ENCODE measurements at regions of chr12 and their contacts with region 1.

Region 1: DNA sequence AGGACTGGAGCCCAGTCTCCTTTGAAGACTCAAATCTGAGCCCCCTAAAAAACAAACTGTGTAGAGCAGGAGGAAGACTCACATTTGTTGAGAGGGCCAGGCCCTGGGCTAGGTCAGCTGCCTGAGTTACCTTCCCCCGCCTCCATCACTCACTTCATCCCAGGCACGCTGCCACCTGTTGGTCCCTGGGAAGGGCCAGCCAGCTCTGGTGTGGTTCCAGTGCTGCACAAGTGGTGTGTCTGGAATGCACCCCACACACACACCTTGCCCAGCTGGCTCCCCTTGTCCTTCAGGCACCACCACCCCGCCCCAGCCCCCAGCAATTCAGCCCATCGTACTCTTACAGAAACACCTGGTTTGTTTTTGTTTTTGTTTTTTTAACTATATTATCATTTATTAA is 9.1 kb downstream of the MVK start:
- DNase-seq: peak; percentile 35
- H3K4me3 Mint-ChIP-seq: peak overlapping the region; percentile 59
- H3K27ac Mint-ChIP-seq: peak overlapping the region; percentile 92
- H3K4me1 Mint-ChIP-seq: peaks cover 14% of the 10 kb centered on the region
- H3K27me3 Mint-ChIP-seq: no peaks in the 10 kb centered on the region
- CTCF ChIP-seq: no peak

Region 2: GRCh38 chr12:109214131-109214530 is 368.5 kb before region 1 on chr12:
- CTCF ChIA-PET with region 1: no interaction called
- POLR2A ChIA-PET with region 1: no interaction called
- intact Hi-C with region 1: no loop called
- DNase-seq: no peak
- H3K4me3 Mint-ChIP-seq: no peak overlapping the region
- H3K27ac Mint-ChIP-seq: no peak overlapping the region
- H3K4me1 Mint-ChIP-seq: no peaks in the 10 kb centered on the region
- H3K27me3 Mint-ChIP-seq: no peaks in the 10 kb centered on the region
- CTCF ChIP-seq: no peak

Region 3: DNA sequence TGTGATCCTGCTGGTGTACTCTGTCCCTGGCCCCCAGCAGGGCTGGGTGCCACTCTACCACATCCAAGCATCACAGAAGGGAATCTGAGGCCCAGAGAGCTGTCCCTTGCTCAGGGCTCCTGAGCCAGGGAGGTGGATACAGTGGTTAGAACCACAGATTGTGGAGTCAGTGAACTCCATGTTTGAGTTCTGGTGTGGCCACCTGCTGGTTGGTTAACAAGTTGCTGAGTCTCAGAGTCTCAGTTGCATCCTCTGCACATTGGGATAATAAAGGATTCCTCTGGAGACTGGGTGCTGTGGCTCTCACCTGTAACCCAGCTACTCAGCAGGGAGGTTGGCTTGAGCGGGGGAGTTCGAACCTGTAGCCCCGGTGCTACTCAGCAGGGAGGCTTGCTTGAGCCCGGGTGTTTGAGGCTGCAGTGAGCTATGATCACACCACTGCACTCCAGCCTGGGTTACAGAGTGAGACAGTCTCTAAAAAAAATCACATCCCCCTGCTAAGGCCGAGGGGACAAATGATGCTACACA is 30.4 kb after region 1 on chr12:
- CTCF ChIA-PET with region 1: no interaction called
- POLR2A ChIA-PET with region 1: no interaction called
- intact Hi-C with region 1: loop called (anchors 1 kb)
- DNase-seq: peak; percentile 34
- H3K4me3 Mint-ChIP-seq: no peak overlapping the region
- H3K27ac Mint-ChIP-seq: no peak overlapping the region
- H3K4me1 Mint-ChIP-seq: no peaks in the 10 kb centered on the region
- H3K27me3 Mint-ChIP-seq: peaks cover 52% of the 10 kb centered on the region
- CTCF ChIP-seq: peak; percentile 25

Region 4: DNA sequence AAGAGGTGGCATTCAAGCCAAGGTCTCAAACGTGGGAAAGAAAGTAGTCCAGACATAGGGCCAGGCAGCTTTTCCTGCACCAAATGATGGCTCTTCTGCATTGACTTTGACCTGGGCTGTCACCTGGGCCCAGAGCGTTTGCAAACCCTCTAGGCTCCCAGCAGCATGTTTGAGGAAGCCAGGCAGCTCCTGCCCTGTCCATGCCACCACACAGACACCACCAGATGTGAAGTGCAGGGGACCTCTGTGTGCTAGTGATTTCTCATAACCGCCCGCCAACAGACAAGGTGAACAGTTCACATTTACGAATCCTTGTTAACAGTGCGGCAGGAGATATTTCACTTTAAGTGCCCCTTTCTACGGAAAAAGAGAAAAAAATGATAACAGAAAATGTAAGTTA is 81.1 kb after region 1 on chr12:
- CTCF ChIA-PET with region 1: no interaction called
- POLR2A ChIA-PET with region 1: no interaction called
- intact Hi-C with region 1: no loop called
- DNase-seq: no peak
- H3K4me3 Mint-ChIP-seq: no peak overlapping the region
- H3K27ac Mint-ChIP-seq: no peak overlapping the region
- H3K4me1 Mint-ChIP-seq: no peaks in the 10 kb centered on the region
- H3K27me3 Mint-ChIP-seq: peaks cover 17% of the 10 kb centered on the region
- CTCF ChIP-seq: no peak

Measured in MCF 10A (cell line).